ENCODE measurements at regions of chr6 and their contacts with region 1.

Region 1: GRCh38 chr6:37783025-37783855 is 36.3 kb upstream of the ZFAND3 start:
- DNase-seq: no peak
- H3K4me3 Mint-ChIP-seq: peak overlapping the region; percentile 28
- H3K27ac Mint-ChIP-seq: no peak overlapping the region
- H3K4me1 Mint-ChIP-seq: peaks cover 15% of the 10 kb centered on the region
- H3K27me3 Mint-ChIP-seq: peaks cover 29% of the 10 kb centered on the region

Region 2: GRCh38 chr6:37794825-37795224 is 11.6 kb after region 1 on chr6:
- CTCF ChIA-PET with region 1: interaction called, 10 read pairs
- POLR2A ChIA-PET with region 1: no interaction called
- DNase-seq: no peak
- H3K4me3 Mint-ChIP-seq: no peak overlapping the region
- H3K27ac Mint-ChIP-seq: no peak overlapping the region
- H3K4me1 Mint-ChIP-seq: peaks cover 7% of the 10 kb centered on the region
- H3K27me3 Mint-ChIP-seq: no peaks in the 10 kb centered on the region

Region 3: DNA sequence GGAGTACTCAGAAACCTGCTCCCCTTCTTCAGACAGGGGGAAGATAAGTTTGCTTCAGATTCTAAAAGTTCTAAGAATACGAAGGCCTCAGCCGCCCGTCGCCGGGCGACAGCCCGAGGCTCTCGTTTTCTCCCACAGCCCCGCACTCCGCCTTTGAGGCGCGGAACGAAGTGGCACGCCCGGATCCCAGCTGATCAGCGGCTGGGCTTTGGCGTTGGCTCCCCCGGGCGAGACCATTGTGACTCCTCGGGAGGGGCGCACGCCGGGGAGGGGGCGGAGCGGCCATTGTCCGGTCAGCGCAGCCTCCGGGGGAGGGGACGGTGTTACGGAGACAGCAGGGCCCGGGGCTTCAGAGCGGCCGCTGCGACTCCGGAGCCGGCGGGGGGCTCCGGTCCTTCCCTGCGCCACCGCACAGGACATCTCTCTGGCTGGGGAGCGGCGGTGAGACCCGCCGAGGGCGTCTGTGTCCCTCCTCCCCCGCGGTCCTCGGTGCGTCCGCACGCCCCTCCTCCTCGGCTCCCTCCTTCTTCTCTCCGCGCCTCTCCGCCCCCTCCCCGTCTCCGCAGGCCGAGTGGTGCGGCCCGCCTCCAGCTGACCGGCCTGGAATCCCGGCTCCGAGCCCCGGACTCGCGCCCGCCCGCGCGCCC is 36.1 kb after region 1 on chr6 and contains the start of gene ZFAND3:
- CTCF ChIA-PET with region 1: no interaction called
- POLR2A ChIA-PET with region 1: no interaction called
- DNase-seq: peak; percentile 94
- H3K4me3 Mint-ChIP-seq: peak within 1 kb of the TSS; percentile 99
- H3K27ac Mint-ChIP-seq: peak within 1 kb of the TSS; percentile 99
- H3K4me1 Mint-ChIP-seq: peaks cover 42% of the 10 kb centered on the region
- H3K27me3 Mint-ChIP-seq: no peaks in the 10 kb centered on the region
- total RNA-seq, gene ZFAND3: 27.4 to 34.7 TPM

Region 4: GRCh38 chr6:37850728-37851285 is 67.6 kb after region 1 on chr6:
- CTCF ChIA-PET with region 1: no interaction called
- POLR2A ChIA-PET with region 1: no interaction called
- DNase-seq: no peak
- H3K4me3 Mint-ChIP-seq: no peak overlapping the region
- H3K27ac Mint-ChIP-seq: no peak overlapping the region
- H3K4me1 Mint-ChIP-seq: peaks cover 14% of the 10 kb centered on the region
- H3K27me3 Mint-ChIP-seq: no peaks in the 10 kb centered on the region

Measured in activated CD4-positive, alpha-beta T cell treated with anti-CD3 and anti-CD28 coated beads, Interleukin-2, amount 10 ng/mL, durations not matched to agents 7 days and 5 days (primary cell).